HEK293 (cell line): ENCODE measurements at regions of chr11 and their contacts with region 1.

Region 1: DNA sequence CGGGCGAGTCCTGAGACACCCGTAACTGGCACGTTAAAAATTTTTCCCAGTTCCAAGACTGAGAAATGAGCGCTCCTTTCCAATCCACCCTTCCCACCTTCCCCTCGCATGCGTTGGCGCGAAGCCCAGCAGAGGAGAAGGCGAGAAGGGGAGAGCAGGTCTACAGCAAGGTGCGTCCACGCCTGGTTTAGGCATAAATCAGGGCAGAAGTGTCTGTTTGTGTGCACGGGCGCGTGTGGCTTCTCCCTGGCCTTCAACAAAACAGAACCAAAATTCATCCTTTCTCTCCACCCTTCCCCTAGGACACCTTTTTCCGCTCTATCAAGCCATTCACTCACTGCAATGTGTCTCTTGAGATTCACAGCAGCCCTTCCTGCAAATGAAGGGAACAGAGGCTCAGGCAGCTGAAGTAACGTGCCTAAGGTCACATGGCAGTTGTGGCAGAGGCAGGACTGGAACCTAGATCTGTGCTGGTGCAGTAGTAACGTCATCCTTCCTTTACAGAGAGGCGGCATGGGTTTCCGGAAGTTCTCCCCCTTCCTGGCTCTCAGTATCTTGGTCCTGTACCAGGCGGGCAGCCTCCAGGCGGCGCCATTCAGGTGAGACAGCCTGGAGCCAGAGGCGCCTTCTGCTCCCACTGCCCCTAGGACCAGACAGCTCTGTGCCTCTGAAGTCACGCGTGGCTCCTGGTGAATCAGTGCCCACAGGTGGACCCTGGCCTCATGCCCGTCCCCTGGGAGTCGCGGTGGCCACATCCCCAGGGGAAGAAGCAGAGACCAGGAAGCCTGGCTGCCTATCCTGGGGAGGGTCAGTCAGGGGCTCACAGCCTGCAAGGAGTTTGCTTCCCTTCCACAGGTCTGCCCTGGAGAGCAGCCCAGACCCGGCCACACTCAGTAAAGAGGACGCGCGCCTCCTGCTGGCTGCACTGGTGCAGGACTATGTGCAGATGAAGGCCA is 1.1 kb downstream of the CALCB start:
- H3K4me3 ChIP-seq: peak overlapping the region; percentile 38
- H3K27ac ChIP-seq: no peak overlapping the region; the same call in 1 of the 2 replicates
- H3K4me1 ChIP-seq: no peaks in the 10 kb centered on the region
- CTCF ChIP-seq: peak; percentile 86

Region 2: GRCh38 chr11:14974515-14975251 is 99.8 kb before region 1 on chr11:
- CTCF ChIA-PET with region 1: interaction called, 36 read pairs
- POLR2A ChIA-PET with region 1: interaction called, 3 read pairs
- H3K4me3 ChIP-seq: peak overlapping the region; percentile 46
- H3K27ac ChIP-seq: no peak overlapping the region; the same call in 1 of the 2 replicates
- H3K4me1 ChIP-seq: no peaks in the 10 kb centered on the region
- CTCF ChIP-seq: peak; percentile 34; the same call in 1 of the 2 replicates

Region 3: DNA sequence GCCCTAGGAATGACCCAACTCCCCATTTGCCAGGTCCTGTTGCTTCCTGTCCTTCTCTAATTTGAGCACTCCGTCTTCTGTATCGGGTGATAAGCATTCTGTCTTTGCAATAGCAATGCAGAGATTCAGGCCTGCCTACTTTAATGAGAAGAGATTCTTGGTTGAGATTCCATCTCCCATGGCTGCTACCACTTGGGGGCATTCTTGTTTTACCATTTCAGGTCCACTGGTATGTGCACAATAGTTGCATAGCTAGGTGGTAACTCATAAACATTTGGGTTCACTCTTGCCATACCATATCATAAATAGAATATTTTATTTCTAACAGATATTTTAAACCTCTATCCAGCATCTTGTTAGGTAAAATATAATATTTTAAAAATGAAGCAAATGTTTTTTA is 35.5 kb before region 1 on chr11:
- CTCF ChIA-PET with region 1: interaction called, 65 read pairs
- POLR2A ChIA-PET with region 1: no interaction called
- H3K4me3 ChIP-seq: no peak overlapping the region
- H3K27ac ChIP-seq: no peak overlapping the region
- H3K4me1 ChIP-seq: no peaks in the 10 kb centered on the region
- CTCF ChIP-seq: no peak

Region 4: GRCh38 chr11:15059132-15059915 is 15.2 kb before region 1 on chr11:
- CTCF ChIA-PET with region 1: interaction called, 14 read pairs
- POLR2A ChIA-PET with region 1: interaction called, 6 read pairs
- H3K4me3 ChIP-seq: no peak overlapping the region
- H3K27ac ChIP-seq: no peak overlapping the region
- H3K4me1 ChIP-seq: no peaks in the 10 kb centered on the region
- CTCF ChIP-seq: no peak

Region 5: DNA sequence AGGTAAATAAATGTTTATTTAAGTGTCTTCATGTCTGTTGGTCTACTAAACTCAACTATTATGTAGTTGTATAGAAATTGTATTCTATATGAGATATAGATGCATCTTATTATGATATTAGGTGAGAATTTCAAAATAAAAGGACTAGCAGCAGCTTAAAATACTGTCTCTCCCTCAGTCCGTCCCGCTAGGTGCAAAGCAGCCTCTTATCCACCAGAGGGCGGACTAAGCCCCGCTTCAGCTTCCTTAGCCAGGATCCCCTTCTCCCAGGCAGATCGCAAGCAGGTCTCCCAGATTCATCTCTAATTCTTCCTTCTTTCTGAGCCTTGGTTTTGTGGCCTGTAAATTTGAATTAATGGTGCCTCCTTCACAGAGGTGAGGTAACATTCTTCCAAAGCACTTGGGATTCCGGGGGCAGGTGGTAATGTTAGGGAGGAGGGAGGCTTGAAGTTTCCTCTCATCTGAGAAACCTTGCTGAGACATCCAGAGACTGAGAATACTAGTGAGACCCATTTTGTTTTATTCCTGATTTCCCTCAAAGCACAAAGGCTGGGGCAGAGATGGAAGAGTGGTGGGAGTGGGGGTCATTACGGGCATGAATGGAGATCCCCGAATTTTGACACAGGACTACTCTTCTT is 26.7 kb after region 1 on chr11:
- CTCF ChIA-PET with region 1: interaction called, 16 read pairs
- POLR2A ChIA-PET with region 1: no interaction called
- H3K4me3 ChIP-seq: no peak overlapping the region
- H3K27ac ChIP-seq: no peak overlapping the region
- H3K4me1 ChIP-seq: no peaks in the 10 kb centered on the region
- CTCF ChIP-seq: peak; percentile 27; the same call in 1 of the 2 replicates